ENCODE measurements at regions of chr17 and their contacts with region 1.

Region 1: DNA sequence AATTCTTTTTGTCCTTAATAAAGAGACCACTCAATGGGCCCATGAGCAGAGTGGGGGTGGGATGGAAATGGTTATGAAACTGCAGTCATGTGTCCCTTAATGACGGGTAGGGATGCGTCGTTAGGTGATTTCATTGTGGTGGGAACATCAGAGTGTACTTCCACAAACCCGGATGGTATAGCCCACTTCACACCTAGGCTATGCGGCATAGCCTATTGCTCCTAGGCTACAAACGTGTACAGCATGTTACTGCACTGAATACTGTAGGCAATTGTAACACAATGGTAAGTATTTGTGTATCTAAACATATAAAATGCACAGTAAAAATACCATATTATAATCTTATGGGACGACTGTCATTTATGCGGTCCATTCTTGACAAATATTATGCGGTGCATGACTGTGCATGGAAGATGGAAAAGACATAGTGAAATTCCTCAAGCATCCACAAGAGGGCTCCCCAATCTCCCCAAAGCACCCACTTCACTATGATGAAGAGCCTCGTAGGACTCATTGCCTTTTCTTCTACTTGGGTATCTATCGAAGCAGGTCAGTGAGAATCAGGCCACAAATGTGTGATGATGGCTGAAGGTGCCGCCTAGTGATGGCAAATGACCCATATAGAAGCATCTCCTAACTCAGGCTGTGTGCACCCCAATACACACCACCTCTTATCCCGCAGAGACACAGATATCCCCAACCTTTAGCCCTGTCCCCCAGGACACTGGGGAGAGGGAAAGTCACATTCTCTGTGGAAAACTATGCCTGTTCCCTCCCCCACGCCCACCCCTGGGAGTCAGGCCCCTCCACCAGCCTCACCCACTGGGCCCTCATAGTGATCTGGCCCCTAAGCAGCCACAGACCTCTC is 43.5 kb downstream of the TBX21 start:
- DNase-seq: no peak
- ATAC-seq: peak; percentile 79
- H3K4me3 Mint-ChIP-seq: no peak overlapping the region
- H3K27ac Mint-ChIP-seq: no peak overlapping the region
- H3K4me1 Mint-ChIP-seq: no peaks in the 10 kb centered on the region
- H3K27me3 Mint-ChIP-seq: peaks cover 52% of the 10 kb centered on the region
- CTCF ChIP-seq: peak; percentile 41

Region 2: DNA sequence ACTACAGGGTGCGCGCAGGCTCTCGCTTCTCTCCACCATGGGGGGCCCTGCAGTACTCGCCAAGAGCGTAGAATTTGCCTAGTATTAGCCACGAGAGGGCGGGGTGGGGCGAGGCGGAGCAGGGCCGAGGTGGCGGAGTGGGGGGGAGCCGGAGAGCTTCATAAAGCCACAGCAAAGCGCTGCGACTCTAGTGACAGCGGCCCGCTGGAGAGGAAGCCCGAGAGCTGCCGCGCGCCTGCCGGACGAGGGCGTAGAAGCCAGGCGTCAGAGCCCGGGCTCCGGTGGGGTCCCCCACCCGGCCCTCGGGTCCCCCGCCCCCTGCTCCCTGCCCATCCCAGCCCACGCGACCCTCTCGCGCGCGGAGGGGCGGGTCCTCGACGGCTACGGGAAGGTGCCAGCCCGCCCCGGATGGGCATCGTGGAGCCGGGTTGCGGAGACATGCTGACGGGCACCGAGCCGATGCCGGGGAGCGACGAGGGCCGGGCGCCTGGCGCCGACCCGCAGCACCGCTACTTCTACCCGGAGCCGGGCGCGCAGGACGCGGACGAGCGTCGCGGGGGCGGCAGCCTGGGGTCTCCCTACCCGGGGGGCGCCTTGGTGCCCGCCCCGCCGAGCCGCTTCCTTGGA is 43.4 kb before region 1 on chr17 and contains the start of gene TBX21:
- CTCF ChIA-PET with region 1: no interaction called
- POLR2A ChIA-PET with region 1: no interaction called
- intact Hi-C with region 1: loop called (anchors 1 kb)
- DNase-seq: peak; percentile 79
- ATAC-seq: peak; percentile 91
- H3K4me3 Mint-ChIP-seq: peak within 1 kb of the TSS; percentile 94
- H3K27ac Mint-ChIP-seq: peak within 1 kb of the TSS; percentile 87
- H3K4me1 Mint-ChIP-seq: peaks cover 52% of the 10 kb centered on the region
- H3K27me3 Mint-ChIP-seq: peaks cover 2% of the 10 kb centered on the region
- CTCF ChIP-seq: peak; percentile 43
- total RNA-seq, gene TBX21: 3.6 and 3.8 TPM in 2 replicates

Region 3: GRCh38 chr17:47789611-47790561 is 13.3 kb after region 1 on chr17:
- CTCF ChIA-PET with region 1: no interaction called
- POLR2A ChIA-PET with region 1: no interaction called
- intact Hi-C with region 1: loop called (anchors 1 kb)
- DNase-seq: peak; percentile 48
- ATAC-seq: peak; percentile 80
- H3K4me3 Mint-ChIP-seq: peak overlapping the region; percentile 74
- H3K27ac Mint-ChIP-seq: no peak overlapping the region
- H3K4me1 Mint-ChIP-seq: peaks cover 9% of the 10 kb centered on the region
- H3K27me3 Mint-ChIP-seq: peaks cover 54% of the 10 kb centered on the region
- CTCF ChIP-seq: no peak

Region 4: DNA sequence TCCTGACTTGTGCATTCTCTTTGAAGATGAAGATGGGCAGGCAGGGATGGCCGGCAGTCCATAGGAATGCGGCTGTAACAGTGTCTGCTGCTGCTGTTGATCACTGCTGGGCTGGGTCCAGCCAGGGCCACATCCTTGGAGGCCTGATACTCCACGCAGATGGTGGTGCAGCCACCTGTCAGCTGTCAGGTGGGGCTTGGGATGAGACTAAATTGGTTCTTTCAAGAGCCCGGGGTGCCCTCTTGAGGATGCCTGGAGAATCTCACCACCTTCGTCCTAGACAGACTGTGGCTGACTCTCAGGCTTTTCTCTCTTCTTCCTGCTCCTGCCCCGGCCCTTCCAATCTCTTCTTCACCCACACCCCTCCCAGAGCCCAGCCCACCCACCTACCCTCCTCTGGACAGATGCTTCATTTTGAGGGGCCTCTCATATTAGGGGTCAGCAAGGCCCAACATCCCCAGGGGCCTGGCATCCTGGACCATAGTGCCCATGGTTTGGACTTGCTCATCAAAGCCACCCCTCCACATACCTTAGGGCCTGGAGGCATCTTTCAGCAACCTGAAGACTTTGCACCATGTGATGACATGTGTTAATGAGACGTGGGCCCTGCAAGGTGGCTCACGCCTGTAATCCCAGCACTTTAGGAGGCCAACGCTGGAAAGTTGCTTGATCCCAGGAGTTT is 25.9 kb after region 1 on chr17:
- CTCF ChIA-PET with region 1: no interaction called
- POLR2A ChIA-PET with region 1: no interaction called
- intact Hi-C with region 1: loop called (anchors 1 kb)
- DNase-seq: peak; percentile 32
- ATAC-seq: peak; percentile 83
- H3K4me3 Mint-ChIP-seq: no peak overlapping the region
- H3K27ac Mint-ChIP-seq: no peak overlapping the region
- H3K4me1 Mint-ChIP-seq: no peaks in the 10 kb centered on the region
- H3K27me3 Mint-ChIP-seq: peaks cover 4% of the 10 kb centered on the region
- CTCF ChIP-seq: no peak

Region 5: DNA sequence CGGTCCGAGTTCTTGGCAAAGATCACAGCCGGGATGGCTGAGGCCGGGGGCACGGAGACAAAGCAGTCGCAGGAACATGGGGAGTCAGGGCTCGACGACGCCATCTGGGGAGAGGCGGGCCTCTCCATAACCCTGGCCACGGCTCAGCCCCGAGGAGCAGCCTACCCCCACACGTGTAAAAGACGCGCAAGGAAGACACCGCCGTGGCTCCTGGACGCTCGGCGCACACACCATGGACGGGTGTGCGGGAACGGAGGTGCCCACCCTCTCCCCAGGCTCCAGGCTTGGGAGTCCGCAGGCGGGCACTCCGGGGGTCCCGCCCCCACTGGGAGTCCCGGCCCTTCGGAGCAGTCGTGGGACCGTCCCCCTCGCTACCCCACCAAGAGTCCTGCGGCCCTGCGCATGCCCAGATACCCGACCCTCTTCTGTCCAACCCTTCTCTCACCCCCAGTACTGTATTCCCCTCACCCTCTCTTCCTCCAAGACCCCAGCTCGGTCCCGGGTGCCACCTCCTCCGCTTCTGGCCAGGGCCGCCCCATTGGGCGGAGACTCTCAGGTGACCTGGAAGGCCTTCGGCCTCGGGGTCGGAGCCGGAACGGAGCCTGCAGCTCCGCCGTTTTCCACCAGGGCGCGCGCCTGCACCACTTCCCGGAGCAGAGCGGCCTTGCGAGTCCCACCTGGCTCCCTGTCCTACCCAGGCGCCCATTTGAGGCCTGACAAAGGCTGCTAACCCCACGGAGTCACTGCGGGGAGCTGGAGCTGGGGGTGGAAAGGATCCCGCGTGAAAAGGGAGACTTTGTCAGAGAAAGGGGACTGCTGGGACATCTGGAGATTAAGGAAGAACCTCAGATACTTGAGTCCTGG is 64.4 kb after region 1 on chr17 and contains the start of gene SCRN2:
- CTCF ChIA-PET with region 1: interaction called, 3 read pairs
- POLR2A ChIA-PET with region 1: no interaction called
- intact Hi-C with region 1: loop called (anchors 1 kb)
- DNase-seq: peak; percentile 91
- ATAC-seq: peak; percentile 94
- H3K4me3 Mint-ChIP-seq: peak within 1 kb of the TSS; percentile 98
- H3K27ac Mint-ChIP-seq: peak within 1 kb of the TSS; percentile 79
- H3K4me1 Mint-ChIP-seq: peaks cover 23% of the 10 kb centered on the region
- H3K27me3 Mint-ChIP-seq: peaks cover 16% of the 10 kb centered on the region
- CTCF ChIP-seq: peak; percentile 61
- total RNA-seq, gene SCRN2: 32.1 and 36.3 TPM in 2 replicates

Region 6: DNA sequence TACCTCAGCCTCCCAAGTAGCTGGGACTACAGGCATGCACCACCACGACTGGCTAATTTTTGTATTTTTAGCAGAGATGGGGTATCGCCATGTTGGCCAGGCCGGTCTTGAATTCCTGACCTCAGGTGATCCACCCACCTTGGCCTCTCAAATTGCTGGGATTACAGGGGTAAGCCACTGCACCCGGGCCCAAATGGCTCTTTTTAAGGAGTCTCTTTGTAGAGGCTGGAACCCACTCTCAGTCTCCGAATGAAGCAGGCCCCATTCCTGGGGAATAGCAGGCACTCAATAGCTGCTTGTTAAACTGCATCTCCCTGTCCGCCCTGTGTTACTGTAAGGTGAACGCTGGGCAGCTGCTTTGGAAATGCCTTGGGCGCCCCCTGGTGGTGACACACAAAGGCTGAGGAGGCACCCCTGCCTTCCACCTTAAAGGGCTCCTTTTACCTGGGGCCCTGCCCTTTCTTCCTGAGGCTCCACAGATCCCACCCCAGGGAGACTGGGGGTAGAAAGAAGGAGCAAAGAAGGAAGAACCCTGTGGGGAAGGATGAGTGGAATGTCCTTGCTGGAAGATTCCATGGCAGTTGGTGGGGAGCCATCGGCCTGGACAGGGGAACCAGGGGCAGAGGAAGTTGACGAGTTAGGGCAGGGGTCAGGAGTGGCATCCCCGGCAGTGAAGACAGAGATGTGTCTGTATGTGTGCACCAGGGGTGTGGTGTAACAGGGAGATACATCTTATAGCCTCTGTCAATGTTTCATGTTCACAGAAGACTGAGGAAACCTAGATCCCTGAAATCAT is 113.4 kb after region 1 on chr17:
- CTCF ChIA-PET with region 1: no interaction called
- POLR2A ChIA-PET with region 1: no interaction called
- intact Hi-C with region 1: loop called (anchors 1 kb)
- DNase-seq: peak; percentile 80
- ATAC-seq: peak; percentile 97
- H3K4me3 Mint-ChIP-seq: no peak overlapping the region
- H3K27ac Mint-ChIP-seq: no peak overlapping the region
- H3K4me1 Mint-ChIP-seq: peaks cover 23% of the 10 kb centered on the region
- H3K27me3 Mint-ChIP-seq: no peaks in the 10 kb centered on the region
- CTCF ChIP-seq: peak; percentile 67

Region 7: DNA sequence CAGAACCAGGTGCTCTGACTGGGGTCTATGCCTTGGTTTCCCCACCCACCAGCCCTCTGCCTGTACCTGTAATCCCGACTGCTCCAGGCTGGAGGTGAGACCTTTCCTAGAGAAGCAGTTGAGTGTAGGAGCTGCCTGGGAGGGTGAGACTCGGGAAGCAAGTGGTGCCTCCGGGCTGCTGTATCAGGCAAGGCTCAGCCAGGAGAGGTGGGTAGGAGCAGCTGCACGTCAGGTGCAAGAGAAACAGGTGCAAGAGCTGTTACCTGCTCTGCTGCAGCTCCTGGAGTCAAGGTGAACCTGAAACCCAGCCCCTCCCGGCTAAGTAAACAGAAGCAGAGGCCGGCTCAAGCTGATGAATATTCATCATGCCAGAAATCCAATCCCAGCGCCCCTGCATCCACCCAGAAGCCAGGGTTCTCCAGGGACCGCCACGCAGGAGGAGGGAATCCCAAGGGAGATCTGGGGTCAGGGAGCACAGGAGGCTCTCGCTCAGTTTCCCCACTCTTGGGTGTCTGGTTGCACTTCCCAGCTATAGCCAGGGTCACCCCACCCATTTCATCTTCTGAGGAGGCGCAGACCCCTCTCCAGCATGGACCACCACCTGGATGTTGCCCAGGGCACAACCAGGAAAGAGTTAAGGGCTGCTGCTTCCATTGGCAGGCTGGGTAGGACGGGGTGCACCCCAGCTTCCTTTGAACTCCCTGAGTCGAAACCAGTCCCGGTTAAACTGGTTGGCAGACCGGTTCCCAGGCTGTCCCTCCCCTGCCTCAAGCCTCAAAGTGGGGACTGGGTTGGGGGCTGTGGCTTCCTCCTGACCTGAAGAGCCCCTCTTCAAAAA is 181.2 kb after region 1 on chr17 and contains the start of gene PRR15L:
- CTCF ChIA-PET with region 1: no interaction called
- POLR2A ChIA-PET with region 1: no interaction called
- intact Hi-C with region 1: no loop called
- DNase-seq: no peak
- ATAC-seq: no peak
- H3K4me3 Mint-ChIP-seq: no peak within 1 kb of the TSS
- H3K27ac Mint-ChIP-seq: no peak within 1 kb of the TSS
- H3K4me1 Mint-ChIP-seq: no peaks in the 10 kb centered on the region
- H3K27me3 Mint-ChIP-seq: no peaks in the 10 kb centered on the region
- CTCF ChIP-seq: no peak
- total RNA-seq, gene PRR15L: not detected in 2 replicates

Region 8: GRCh38 chr17:48162946-48163506 is 386.5 kb after region 1 on chr17:
- CTCF ChIA-PET with region 1: no interaction called
- POLR2A ChIA-PET with region 1: no interaction called
- intact Hi-C with region 1: no loop called
- DNase-seq: no peak
- ATAC-seq: no peak
- H3K4me3 Mint-ChIP-seq: no peak overlapping the region
- H3K27ac Mint-ChIP-seq: no peak overlapping the region
- H3K4me1 Mint-ChIP-seq: peaks cover 7% of the 10 kb centered on the region
- H3K27me3 Mint-ChIP-seq: no peaks in the 10 kb centered on the region
- CTCF ChIP-seq: no peak

Measured in activated B cell treated with CpG ODN at 0.5 μM for 24 hours (primary cell).